Activated CD8-positive, alpha-beta memory T cell treated with anti-CD3 and anti-CD28 coated beads, Interleukin-2, amount 10 ng/mL, durations not matched to agents 7 days and 5 days (primary cell): ENCODE measurements at regions of chr3 and their contacts with region 1.

Region 1: DNA sequence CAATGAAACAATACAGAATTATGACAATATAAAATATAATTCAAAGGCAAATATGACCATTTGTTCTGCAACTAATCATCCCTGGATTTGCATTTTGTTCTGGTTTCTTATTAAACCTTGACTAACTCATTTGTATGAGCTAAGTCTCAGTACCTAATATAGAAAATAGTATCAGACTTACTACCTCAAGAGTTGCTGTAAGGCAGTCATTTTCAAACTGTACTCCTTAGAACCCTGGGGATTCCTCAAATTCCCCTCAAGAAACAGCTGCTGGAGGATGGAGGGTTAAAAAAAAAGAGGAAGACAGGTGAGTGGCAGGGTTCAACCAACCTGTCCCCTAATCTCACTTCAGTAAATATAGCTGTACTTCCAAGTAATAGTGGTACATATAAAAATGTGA is 11.1 kb downstream of the ZBTB11 start:
- DNase-seq: no peak
- ATAC-seq: no peak
- H3K4me3 Mint-ChIP-seq: no peak overlapping the region
- H3K27ac Mint-ChIP-seq: no peak overlapping the region
- H3K4me1 Mint-ChIP-seq: peaks cover 1% of the 10 kb centered on the region
- H3K27me3 Mint-ChIP-seq: no peaks in the 10 kb centered on the region

Region 2: GRCh38 chr3:101676765-101677435 is 11.0 kb after region 1 on chr3 and contains the start of gene ZBTB11:
- CTCF ChIA-PET with region 1: interaction called, 10 read pairs
- DNase-seq: peak; percentile 100
- ATAC-seq: peak; percentile 74
- H3K4me3 Mint-ChIP-seq: peak within 1 kb of the TSS; percentile 86
- H3K27ac Mint-ChIP-seq: peak within 1 kb of the TSS; percentile 98
- H3K4me1 Mint-ChIP-seq: peaks cover 44% of the 10 kb centered on the region
- H3K27me3 Mint-ChIP-seq: no peaks in the 10 kb centered on the region
- total RNA-seq, gene ZBTB11: 30.3 to 31.3 TPM

Region 3: GRCh38 chr3:101687159-101687931 is 21.5 kb after region 1 on chr3:
- CTCF ChIA-PET with region 1: no interaction called
- DNase-seq: no peak
- ATAC-seq: no peak
- H3K4me3 Mint-ChIP-seq: peak overlapping the region; percentile 100
- H3K27ac Mint-ChIP-seq: peak overlapping the region; percentile 95
- H3K4me1 Mint-ChIP-seq: peaks cover 31% of the 10 kb centered on the region
- H3K27me3 Mint-ChIP-seq: no peaks in the 10 kb centered on the region